ENCODE measurements at regions of chr2 and their contacts with region 1.

Region 1: GRCh38 chr2:20962939-20963557 is 80.8 kb downstream of the APOB start:
- H3K4me3 ChIP-seq: no peak overlapping the region
- H3K27ac ChIP-seq: no peak overlapping the region
- H3K4me1 ChIP-seq: no peaks in the 10 kb centered on the region
- CTCF ChIP-seq: peak; percentile 76

Region 2: DNA sequence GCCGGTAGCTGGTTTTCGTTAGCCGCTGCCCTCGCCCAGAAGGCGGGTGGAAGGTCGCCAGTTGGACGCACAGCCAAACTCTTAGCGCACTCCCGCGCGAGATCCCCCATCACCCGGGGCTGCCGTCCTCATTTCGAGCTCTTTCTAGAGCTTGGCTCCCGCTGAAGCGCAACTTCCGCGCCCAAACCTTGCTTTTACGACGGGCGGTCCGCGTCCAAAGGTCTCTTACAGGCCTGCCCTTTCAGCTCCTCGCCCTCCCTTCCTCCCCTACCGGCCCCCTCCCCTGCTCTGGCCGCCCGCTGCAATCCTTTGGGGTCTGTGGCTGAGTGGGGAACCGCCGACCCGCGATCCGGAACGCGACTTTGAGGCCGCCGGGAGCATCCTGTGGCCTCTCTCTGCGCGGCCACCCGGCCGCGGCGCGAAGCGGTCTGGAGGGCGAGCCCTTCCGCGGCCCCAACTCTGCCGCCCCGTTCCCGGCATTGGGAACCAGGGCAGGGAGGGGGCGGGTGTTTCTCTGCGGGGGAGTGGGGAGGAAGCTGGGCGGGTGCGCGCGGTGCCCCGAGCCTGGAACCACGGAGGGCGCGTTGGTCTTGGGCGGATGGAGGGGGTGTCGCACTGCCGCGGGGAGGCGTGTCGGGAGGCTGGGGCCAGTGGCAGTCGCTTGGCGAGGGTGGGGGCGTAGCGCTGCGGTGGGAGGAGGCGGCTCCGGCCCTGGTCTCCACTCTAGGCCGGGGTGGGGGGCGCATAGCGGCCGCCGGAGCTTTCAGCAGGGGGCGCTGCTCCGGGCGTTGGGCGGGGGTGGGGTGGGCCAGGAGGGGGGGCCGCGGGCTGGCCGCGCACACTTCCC is 296.5 kb before region 1 on chr2 and contains the start of gene GDF7:
- CTCF ChIA-PET with region 1: interaction called, 147 read pairs
- POLR2A ChIA-PET with region 1: no interaction called
- H3K4me3 ChIP-seq: peak within 1 kb of the TSS; percentile 49
- H3K27ac ChIP-seq: peak within 1 kb of the TSS; percentile 37; the same call in 1 of the 2 replicates
- H3K4me1 ChIP-seq: no peaks in the 10 kb centered on the region
- CTCF ChIP-seq: peak; percentile 67

Region 3: GRCh38 chr2:20682167-20682920 is 280.7 kb before region 1 on chr2:
- CTCF ChIA-PET with region 1: interaction called, 13 read pairs
- POLR2A ChIA-PET with region 1: no interaction called
- H3K4me3 ChIP-seq: no peak overlapping the region
- H3K27ac ChIP-seq: no peak overlapping the region
- H3K4me1 ChIP-seq: no peaks in the 10 kb centered on the region
- CTCF ChIP-seq: no peak

Region 4: DNA sequence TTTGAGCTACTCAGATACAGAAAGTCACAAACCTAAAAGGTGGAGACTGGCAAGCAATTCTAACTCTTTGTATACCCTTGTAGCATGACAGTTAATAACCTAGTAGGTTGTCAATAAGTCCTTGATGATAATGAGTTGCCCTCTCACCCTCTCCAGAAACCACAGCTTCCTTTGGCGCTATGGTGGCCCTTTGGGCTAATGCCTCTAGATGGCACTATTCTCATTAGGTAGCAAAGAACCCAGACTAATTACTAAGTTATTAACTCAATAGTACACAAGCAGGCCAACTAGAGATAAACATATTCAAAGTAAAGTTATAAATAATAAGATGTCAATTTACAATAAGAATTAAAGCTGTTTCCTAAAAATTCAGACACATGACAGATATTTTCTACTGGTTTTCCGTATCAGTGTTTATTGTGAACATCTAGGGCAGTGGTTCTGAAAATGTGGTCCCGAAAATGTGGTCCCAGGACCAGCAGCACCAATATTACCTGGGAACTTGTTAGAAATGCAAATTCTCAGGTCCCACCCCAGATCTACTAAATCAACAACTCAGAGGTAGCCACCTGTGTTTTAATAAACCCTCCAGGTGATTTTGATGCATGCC is 181.3 kb before region 1 on chr2:
- CTCF ChIA-PET with region 1: interaction called, 40 read pairs
- POLR2A ChIA-PET with region 1: no interaction called
- H3K4me3 ChIP-seq: no peak overlapping the region
- H3K27ac ChIP-seq: no peak overlapping the region
- H3K4me1 ChIP-seq: no peaks in the 10 kb centered on the region
- CTCF ChIP-seq: no peak

Region 5: GRCh38 chr2:20976527-20976926 is 13.5 kb after region 1 on chr2:
- CTCF ChIA-PET with region 1: interaction called, 10 read pairs
- POLR2A ChIA-PET with region 1: no interaction called
- H3K4me3 ChIP-seq: no peak overlapping the region
- H3K27ac ChIP-seq: no peak overlapping the region
- H3K4me1 ChIP-seq: no peaks in the 10 kb centered on the region
- CTCF ChIP-seq: no peak

Region 6: GRCh38 chr2:21392649-21393048 is 429.6 kb after region 1 on chr2:
- CTCF ChIA-PET with region 1: no interaction called
- POLR2A ChIA-PET with region 1: no interaction called
- H3K4me3 ChIP-seq: no peak overlapping the region
- H3K27ac ChIP-seq: no peak overlapping the region
- H3K4me1 ChIP-seq: no peaks in the 10 kb centered on the region
- CTCF ChIP-seq: no peak